ENCODE measurements at regions of chr1 and their contacts with region 1.

Region 1: GRCh38 chr1:165073185-165074007 is 283.1 kb downstream of the LMX1A start:
- DNase-seq: peak; percentile 56
- ATAC-seq: peak; percentile 96
- H3K4me3 ChIP-seq: no peak overlapping the region
- H3K27ac ChIP-seq: no peak overlapping the region
- H3K4me1 ChIP-seq: no peaks in the 10 kb centered on the region
- H3K27me3 ChIP-seq: no peaks in the 10 kb centered on the region; the same call in 1 of the 2 replicates
- CTCF ChIP-seq: peak; percentile 80
- POLR2A ChIP-seq: no peak
- RAD21 ChIP-seq: peak; percentile 87

Region 2: DNA sequence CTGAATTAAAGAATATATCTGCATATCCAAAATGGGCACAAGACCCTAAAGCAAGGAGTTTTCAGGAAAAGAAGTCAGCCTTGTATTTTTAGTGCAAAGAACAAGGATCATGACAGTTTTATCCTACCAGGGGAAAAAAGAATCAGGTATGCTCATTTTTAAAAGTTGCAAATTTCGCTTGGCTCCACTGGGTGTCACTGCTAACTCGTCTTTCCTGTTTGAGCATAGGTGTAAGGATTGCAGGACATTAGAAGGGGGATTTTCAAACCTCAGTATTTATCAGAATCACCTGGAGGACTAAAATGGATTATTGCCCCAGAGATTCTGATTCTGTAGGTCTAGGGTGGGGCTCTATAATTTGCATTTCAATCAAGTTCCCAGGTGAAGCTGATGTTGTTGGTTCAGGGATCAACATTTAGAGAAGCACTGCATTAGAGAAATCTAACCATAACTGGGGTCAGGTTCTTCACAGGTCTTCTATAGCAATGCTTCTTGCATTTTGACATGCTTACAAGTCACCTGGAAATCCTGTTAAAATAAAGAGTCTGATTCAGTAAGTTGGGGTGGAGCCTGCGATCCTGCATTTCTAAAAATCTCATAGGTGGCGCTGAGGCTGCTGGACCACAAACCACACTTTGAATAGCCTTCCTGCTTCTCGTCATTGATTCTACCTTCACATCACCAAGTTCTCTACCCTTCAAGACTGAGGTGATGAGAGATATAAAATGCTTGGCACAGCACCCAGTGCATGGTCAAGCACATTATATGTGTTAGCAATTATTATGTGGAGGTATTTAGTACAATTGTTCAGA is 1712.1 kb before region 1 on chr1:
- CTCF ChIA-PET with region 1: no interaction called
- POLR2A ChIA-PET with region 1: no interaction called
- dilution Hi-C with region 1: no loop called
- in situ Hi-C with region 1: no loop called
- intact Hi-C with region 1: loop called (anchors 1 kb)
- DNase-seq: no peak
- ATAC-seq: peak; percentile 53; the same call in 1 of the 2 replicates
- H3K4me3 ChIP-seq: no peak overlapping the region
- H3K27ac ChIP-seq: no peak overlapping the region
- H3K4me1 ChIP-seq: no peaks in the 10 kb centered on the region
- H3K27me3 ChIP-seq: peaks cover 5% of the 10 kb centered on the region
- CTCF ChIP-seq: peak; percentile 47
- POLR2A ChIP-seq: no peak
- RAD21 ChIP-seq: peak; percentile 54

Region 3: GRCh38 chr1:163410073-163410999 is 1663.1 kb before region 1 on chr1:
- CTCF ChIA-PET with region 1: interaction called, 3 read pairs
- POLR2A ChIA-PET with region 1: no interaction called
- dilution Hi-C with region 1: no loop called
- in situ Hi-C with region 1: loop called (anchors 25 kb)
- intact Hi-C with region 1: loop called (anchors 1 kb)
- DNase-seq: peak; percentile 56
- ATAC-seq: peak; percentile 81
- H3K4me3 ChIP-seq: no peak overlapping the region
- H3K27ac ChIP-seq: no peak overlapping the region
- H3K4me1 ChIP-seq: no peaks in the 10 kb centered on the region
- H3K27me3 ChIP-seq: peaks cover 5% of the 10 kb centered on the region
- CTCF ChIP-seq: peak; percentile 75
- POLR2A ChIP-seq: no peak
- RAD21 ChIP-seq: peak; percentile 72

Region 4: GRCh38 chr1:163820766-163821165 is 1252.6 kb before region 1 on chr1:
- CTCF ChIA-PET with region 1: interaction called, 3 read pairs
- POLR2A ChIA-PET with region 1: no interaction called
- dilution Hi-C with region 1: no loop called
- in situ Hi-C with region 1: no loop called
- intact Hi-C with region 1: loop called (anchors 10 kb)
- DNase-seq: no peak
- ATAC-seq: no peak
- H3K4me3 ChIP-seq: no peak overlapping the region
- H3K27ac ChIP-seq: no peak overlapping the region
- H3K4me1 ChIP-seq: no peaks in the 10 kb centered on the region
- H3K27me3 ChIP-seq: no peaks in the 10 kb centered on the region
- CTCF ChIP-seq: no peak
- POLR2A ChIP-seq: no peak
- RAD21 ChIP-seq: no peak

Region 5: GRCh38 chr1:164602480-164603093 is 470.8 kb before region 1 on chr1:
- CTCF ChIA-PET with region 1: no interaction called
- POLR2A ChIA-PET with region 1: no interaction called
- dilution Hi-C with region 1: no loop called
- in situ Hi-C with region 1: no loop called
- intact Hi-C with region 1: loop called (anchors 10 kb)
- DNase-seq: peak; percentile 52
- ATAC-seq: peak; percentile 75
- H3K4me3 ChIP-seq: no peak overlapping the region
- H3K27ac ChIP-seq: peak overlapping the region; percentile 44
- H3K4me1 ChIP-seq: peaks cover 12% of the 10 kb centered on the region
- H3K27me3 ChIP-seq: no peaks in the 10 kb centered on the region
- CTCF ChIP-seq: no peak
- POLR2A ChIP-seq: no peak
- RAD21 ChIP-seq: no peak

Region 6: GRCh38 chr1:165109012-165109411 is 35.6 kb after region 1 on chr1:
- CTCF ChIA-PET with region 1: no interaction called
- POLR2A ChIA-PET with region 1: no interaction called
- dilution Hi-C with region 1: no loop called
- in situ Hi-C with region 1: no loop called
- intact Hi-C with region 1: no loop called
- DNase-seq: no peak
- ATAC-seq: no peak
- H3K4me3 ChIP-seq: no peak overlapping the region
- H3K27ac ChIP-seq: no peak overlapping the region
- H3K4me1 ChIP-seq: no peaks in the 10 kb centered on the region
- H3K27me3 ChIP-seq: no peaks in the 10 kb centered on the region
- CTCF ChIP-seq: no peak
- POLR2A ChIP-seq: no peak
- RAD21 ChIP-seq: no peak